Naive thymus-derived CD4-positive, alpha-beta T cell (primary cell): ENCODE measurements at regions of chr10 and their contacts with region 1.

Region 1: DNA sequence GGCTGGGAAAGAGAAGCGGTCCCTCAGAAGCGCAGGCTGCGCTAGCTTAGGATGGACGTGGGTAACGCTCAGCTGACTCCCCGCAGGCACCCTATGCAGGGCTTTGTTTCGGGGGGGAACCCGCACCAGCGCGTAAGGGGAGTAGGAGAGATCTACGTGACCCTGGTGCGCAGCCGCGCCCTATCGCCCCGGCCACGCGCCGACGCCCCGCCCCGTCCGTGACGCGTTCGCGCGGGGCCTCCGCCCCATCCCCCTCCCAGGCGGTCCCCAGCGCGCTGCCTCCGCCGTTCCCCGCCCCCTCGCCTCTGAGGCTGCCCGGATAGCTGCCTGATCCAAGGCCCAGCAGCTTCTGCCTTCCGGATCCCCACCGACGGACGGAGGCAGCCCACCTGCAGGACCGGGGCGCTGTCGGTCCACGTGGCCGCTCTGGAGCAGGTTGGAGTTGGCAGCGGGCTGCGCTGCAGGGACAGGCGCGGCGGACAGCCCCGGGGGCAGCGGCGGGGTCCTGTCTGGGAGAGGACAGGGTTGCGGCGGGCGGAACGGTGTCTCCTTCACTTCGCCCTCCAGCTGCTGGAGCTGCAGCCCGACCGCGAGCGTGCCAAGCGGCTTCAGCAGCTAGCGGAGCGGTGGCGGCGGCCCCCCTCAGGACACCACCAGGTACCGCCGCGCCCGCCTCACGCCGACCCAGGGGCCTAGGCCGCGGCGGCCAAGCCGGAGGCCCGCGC is at the start of gene VDAC2:
- DNase-seq: peak; percentile 92 to 100 (median 98)
- ATAC-seq: peak; percentile 92
- H3K4me3 ChIP-seq: peak within 1 kb of the TSS; percentile 81
- H3K4me3 Mint-ChIP-seq: peak within 1 kb of the TSS; percentile 87 to 100 (median 98)
- H3K27ac ChIP-seq: peak within 1 kb of the TSS; percentile 96
- H3K27ac Mint-ChIP-seq: peak within 1 kb of the TSS; percentile 99 to 100 (median 100)
- H3K4me1 ChIP-seq: peaks cover 15 to 21% of the 10 kb centered on the region in 2 donors
- H3K4me1 Mint-ChIP-seq: peaks cover 21 to 44% (median 29%) of the 10 kb centered on the region in 7 donors
- H3K27me3 ChIP-seq: no peaks in the 10 kb centered on the region
- H3K27me3 Mint-ChIP-seq: no peaks in the 10 kb centered on the region
- total RNA-seq, gene VDAC2: 82.8 to 138 (median 121) TPM

Region 2: GRCh38 chr10:75042292-75042974 is 168.0 kb before region 1 on chr10:
- CTCF ChIA-PET with region 1: no interaction called
- POLR2A ChIA-PET with region 1: no interaction called
- intact Hi-C with region 1: loop called in 1 of 2 experiments (anchors 1 kb)
- DNase-seq: no peak
- ATAC-seq: no peak
- H3K4me3 ChIP-seq: no peak overlapping the region
- H3K4me3 Mint-ChIP-seq: no peak overlapping the region
- H3K27ac ChIP-seq: no peak overlapping the region
- H3K27ac Mint-ChIP-seq: peak overlapping the region in 1 of 9 donors; percentile 69
- H3K4me1 ChIP-seq: no peaks in the 10 kb centered on the region
- H3K4me1 Mint-ChIP-seq: peaks cover 3 to 38% (median 7%) of the 10 kb centered on the region in 7 donors
- H3K27me3 ChIP-seq: no peaks in the 10 kb centered on the region
- H3K27me3 Mint-ChIP-seq: peaks cover 0 to 18% (median 8%) of the 10 kb centered on the region in 5 donors

Region 3: DNA sequence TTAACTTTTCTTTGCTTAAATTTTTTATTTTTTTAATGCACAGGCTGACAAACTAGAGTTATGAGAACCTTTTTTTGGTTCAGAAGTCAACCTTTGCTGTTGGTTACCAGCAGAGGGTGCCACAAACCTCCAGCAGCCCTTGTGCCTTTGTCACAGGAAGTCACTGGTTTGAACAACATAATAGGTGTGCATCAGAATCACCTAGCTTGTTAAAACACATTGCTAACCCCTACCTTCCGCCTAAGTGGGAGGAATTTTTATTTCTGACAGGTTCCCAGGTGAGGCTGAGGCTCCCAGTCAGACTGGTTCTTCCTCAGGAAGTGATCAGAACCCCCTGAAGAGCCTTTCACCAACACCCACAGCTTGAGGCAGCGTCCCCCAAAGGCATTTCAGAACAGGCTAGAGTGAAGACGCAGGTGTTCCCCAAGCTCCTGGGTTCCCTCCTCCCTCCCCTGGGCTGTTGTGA is 22.4 kb before region 1 on chr10:
- CTCF ChIA-PET with region 1: interaction called, 10 read pairs
- POLR2A ChIA-PET with region 1: interaction called, 32 read pairs
- intact Hi-C with region 1: loop called (anchors 1 kb)
- DNase-seq: peak; percentile 33 to 84 (median 77)
- ATAC-seq: peak; percentile 94
- H3K4me3 ChIP-seq: no peak overlapping the region
- H3K4me3 Mint-ChIP-seq: peak overlapping the region in 1 of 10 donors; percentile 11
- H3K27ac ChIP-seq: peak overlapping the region; percentile 59
- H3K27ac Mint-ChIP-seq: peak overlapping the region; percentile 58 to 98 (median 90)
- H3K4me1 ChIP-seq: peaks cover 4 to 5% of the 10 kb centered on the region in 2 donors
- H3K4me1 Mint-ChIP-seq: peaks cover 0 to 12% (median 7%) of the 10 kb centered on the region in 7 donors
- H3K27me3 ChIP-seq: no peaks in the 10 kb centered on the region
- H3K27me3 Mint-ChIP-seq: no peaks in the 10 kb centered on the region

Region 4: GRCh38 chr10:75229971-75230370 is 19.5 kb after region 1 on chr10:
- CTCF ChIA-PET with region 1: interaction called, 44 read pairs
- POLR2A ChIA-PET with region 1: interaction called, 122 read pairs
- intact Hi-C with region 1: loop called (anchors 1 kb)
- DNase-seq: no peak
- ATAC-seq: no peak
- H3K4me3 ChIP-seq: no peak overlapping the region
- H3K4me3 Mint-ChIP-seq: no peak overlapping the region
- H3K27ac ChIP-seq: peak overlapping the region; percentile 52
- H3K27ac Mint-ChIP-seq: peak overlapping the region in 8 of 9 donors; percentile 49 to 97 (median 88)
- H3K4me1 ChIP-seq: peaks cover 5 to 8% of the 10 kb centered on the region in 2 donors
- H3K4me1 Mint-ChIP-seq: peaks cover 17 to 52% (median 41%) of the 10 kb centered on the region in 7 donors
- H3K27me3 ChIP-seq: no peaks in the 10 kb centered on the region
- H3K27me3 Mint-ChIP-seq: no peaks in the 10 kb centered on the region